ENCODE measurements at regions of chr17 and their contacts with region 1.

Region 1: DNA sequence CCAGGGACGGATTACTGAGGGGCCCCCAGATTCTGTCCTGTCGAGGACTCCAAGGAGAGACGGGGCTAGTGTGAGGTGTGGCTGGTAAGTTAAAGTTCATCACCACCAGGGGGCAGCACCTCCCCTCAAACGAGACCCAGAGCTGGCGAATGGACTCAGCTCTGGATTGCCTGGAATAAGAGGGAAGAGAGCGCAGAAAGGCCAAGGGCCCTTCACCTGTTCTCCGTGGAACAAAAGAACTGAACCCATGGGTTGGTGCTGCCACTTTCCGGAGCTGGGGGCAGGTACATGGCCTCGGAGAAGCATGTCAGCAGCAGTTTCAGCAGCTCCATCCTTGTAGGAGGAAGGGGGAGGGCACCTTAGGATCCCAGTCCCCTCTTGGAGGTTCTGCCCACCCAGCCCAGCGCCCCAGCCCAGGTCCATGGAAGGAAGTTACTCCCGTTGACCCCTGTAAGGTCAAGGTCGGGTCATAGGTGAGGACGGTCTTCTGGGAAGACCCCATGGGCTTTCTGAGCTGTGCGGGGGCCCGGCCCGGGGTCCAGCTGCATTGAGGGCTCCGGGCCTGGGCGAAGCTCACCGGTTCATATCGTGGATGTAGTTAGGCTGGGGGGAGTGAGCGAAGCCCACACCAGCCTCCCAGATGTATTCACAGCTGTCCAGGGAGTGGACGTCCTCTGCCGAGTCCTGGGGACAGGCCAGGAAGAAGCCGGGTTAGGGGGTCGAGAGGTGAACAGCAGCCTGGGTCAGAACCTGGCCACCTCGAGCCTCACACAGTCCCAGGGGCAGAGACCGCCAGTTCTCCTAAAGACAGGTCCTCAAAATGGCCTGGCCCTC is 10.7 kb downstream of the HID1 start:
- DNase-seq: peak; percentile 63 to 85
- H3K4me3 ChIP-seq: no peak overlapping the region
- H3K27ac ChIP-seq: no peak overlapping the region
- H3K4me1 ChIP-seq: no peaks in the 10 kb centered on the region
- H3K27me3 ChIP-seq: no peaks in the 10 kb centered on the region
- CTCF ChIP-seq: peak; percentile 91

Region 2: DNA sequence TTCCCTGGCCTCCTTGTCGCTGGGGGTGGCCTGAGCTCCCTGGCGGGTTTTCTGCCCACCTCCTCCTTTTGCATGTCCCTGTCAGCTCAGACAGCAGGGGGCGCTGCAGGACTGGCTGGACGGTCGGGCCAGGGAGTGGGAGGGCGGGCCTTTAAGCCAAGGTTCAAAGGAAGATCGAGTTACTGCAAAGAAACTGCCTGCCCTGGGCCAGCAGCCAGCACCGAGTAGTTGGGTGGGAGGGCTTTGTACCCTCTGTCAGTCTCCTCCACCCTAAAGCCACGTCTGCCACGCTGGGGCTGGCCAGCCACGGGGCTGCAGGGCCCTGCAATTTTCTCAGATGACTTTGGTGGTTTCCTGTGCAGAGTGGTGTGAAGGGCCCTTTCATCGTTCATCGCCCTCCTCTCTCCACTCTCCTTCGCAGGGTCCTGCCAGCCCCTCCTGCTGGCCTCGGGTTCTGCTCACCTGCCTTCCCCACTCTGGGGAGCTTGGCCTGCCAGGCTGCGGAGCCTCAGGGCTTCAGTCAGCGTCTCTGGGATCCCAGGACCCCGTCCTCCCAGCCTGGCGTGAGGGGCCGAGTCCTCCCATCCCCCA is 582.3 kb before region 1 on chr17:
- CTCF ChIA-PET with region 1: no interaction called
- POLR2A ChIA-PET with region 1: no interaction called
- intact Hi-C with region 1: loop called (anchors 5 kb)
- DNase-seq: peak; percentile 56 to 90
- H3K4me3 ChIP-seq: no peak overlapping the region
- H3K27ac ChIP-seq: no peak overlapping the region
- H3K4me1 ChIP-seq: peaks cover 17% of the 10 kb centered on the region
- H3K27me3 ChIP-seq: peaks cover 47% of the 10 kb centered on the region
- CTCF ChIP-seq: peak; percentile 95

Region 3: GRCh38 chr17:74776044-74776977 is 185.6 kb before region 1 on chr17 and contains the start of gene NAT9:
- CTCF ChIA-PET with region 1: interaction called, 8 read pairs
- POLR2A ChIA-PET with region 1: no interaction called
- intact Hi-C with region 1: loop called (anchors 10 kb)
- DNase-seq: peak; percentile 83 to 99
- H3K4me3 ChIP-seq: peak within 1 kb of the TSS; percentile 58
- H3K27ac ChIP-seq: 0 out of 2 replicates have a peak within 1 kb of the TSS, but pooled peaks have one; percentile 20
- H3K4me1 ChIP-seq: peaks cover 16% of the 10 kb centered on the region
- H3K27me3 ChIP-seq: no peaks in the 10 kb centered on the region
- CTCF ChIP-seq: no peak
- total RNA-seq, gene NAT9: 31.5 and 37.6 TPM in 2 replicates

Region 4: GRCh38 chr17:74833501-74834377 is 128.1 kb before region 1 on chr17:
- CTCF ChIA-PET with region 1: no interaction called
- POLR2A ChIA-PET with region 1: no interaction called
- intact Hi-C with region 1: no loop called
- DNase-seq: peak in 1 of 2 experiments; percentile 53
- H3K4me3 ChIP-seq: no peak overlapping the region
- H3K27ac ChIP-seq: no peak overlapping the region
- H3K4me1 ChIP-seq: no peaks in the 10 kb centered on the region
- H3K27me3 ChIP-seq: no peaks in the 10 kb centered on the region
- CTCF ChIP-seq: no peak

Region 5: DNA sequence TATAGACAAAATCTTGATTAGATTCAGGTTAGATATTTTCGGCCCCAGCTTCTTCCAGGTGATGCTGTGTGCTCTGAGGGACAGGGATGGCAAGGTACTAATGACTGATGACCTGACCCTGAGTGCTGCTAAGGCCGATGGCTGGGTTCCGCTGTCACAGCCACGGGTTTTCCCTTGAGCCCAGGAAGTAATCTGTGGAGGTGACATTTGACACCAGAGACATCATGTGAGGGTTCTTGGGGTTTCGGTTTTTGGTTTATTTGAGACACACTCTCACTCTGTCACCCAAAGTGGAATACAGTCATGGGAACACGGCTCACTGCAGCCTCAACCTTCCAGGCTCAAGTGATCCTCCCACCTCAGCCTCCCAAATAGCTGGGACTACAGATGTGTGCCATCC is 16.3 kb before region 1 on chr17:
- CTCF ChIA-PET with region 1: interaction called, 11 read pairs
- POLR2A ChIA-PET with region 1: no interaction called
- intact Hi-C with region 1: no loop called
- DNase-seq: no peak
- H3K4me3 ChIP-seq: no peak overlapping the region
- H3K27ac ChIP-seq: no peak overlapping the region
- H3K4me1 ChIP-seq: peaks cover 29% of the 10 kb centered on the region
- H3K27me3 ChIP-seq: no peaks in the 10 kb centered on the region
- CTCF ChIP-seq: no peak

Region 6: GRCh38 chr17:74999523-74999922 is 37.6 kb after region 1 on chr17:
- CTCF ChIA-PET with region 1: no interaction called
- POLR2A ChIA-PET with region 1: no interaction called
- intact Hi-C with region 1: no loop called
- DNase-seq: no peak
- H3K4me3 ChIP-seq: no peak overlapping the region
- H3K27ac ChIP-seq: no peak overlapping the region
- H3K4me1 ChIP-seq: no peaks in the 10 kb centered on the region; the same call in 1 of the 2 replicates
- H3K27me3 ChIP-seq: no peaks in the 10 kb centered on the region
- CTCF ChIP-seq: no peak

Region 7: GRCh38 chr17:75046582-75047289 is 84.9 kb after region 1 on chr17 and contains the starts of genes ATP5PD and KCTD2:
- CTCF ChIA-PET with region 1: no interaction called
- POLR2A ChIA-PET with region 1: interaction called, 5 read pairs
- intact Hi-C with region 1: loop called (anchors 5 kb)
- DNase-seq: peak; percentile 89 to 95
- H3K4me3 ChIP-seq: peak within 1 kb of the TSS; percentile 84
- H3K27ac ChIP-seq: peak within 1 kb of the TSS; percentile 60
- H3K4me1 ChIP-seq: peaks cover 22% of the 10 kb centered on the region
- H3K27me3 ChIP-seq: no peaks in the 10 kb centered on the region
- CTCF ChIP-seq: no peak; the same call in 1 of the 2 replicates
- total RNA-seq, gene ATP5PD: 306 and 336 TPM in 2 replicates
- total RNA-seq, gene KCTD2: 18.4 and 18.6 TPM in 2 replicates

Region 8: GRCh38 chr17:75131280-75132017 is 169.6 kb after region 1 on chr17 and contains the start of gene NT5C:
- CTCF ChIA-PET with region 1: no interaction called
- POLR2A ChIA-PET with region 1: no interaction called
- intact Hi-C with region 1: no loop called
- DNase-seq: peak; percentile 62 to 71
- H3K4me3 ChIP-seq: peak within 1 kb of the TSS; percentile 95
- H3K27ac ChIP-seq: peak within 1 kb of the TSS; percentile 72
- H3K4me1 ChIP-seq: peaks cover 20% of the 10 kb centered on the region
- H3K27me3 ChIP-seq: no peaks in the 10 kb centered on the region
- CTCF ChIP-seq: peak; percentile 65
- total RNA-seq, gene NT5C: 38.6 and 52.3 TPM in 2 replicates

Region 9: DNA sequence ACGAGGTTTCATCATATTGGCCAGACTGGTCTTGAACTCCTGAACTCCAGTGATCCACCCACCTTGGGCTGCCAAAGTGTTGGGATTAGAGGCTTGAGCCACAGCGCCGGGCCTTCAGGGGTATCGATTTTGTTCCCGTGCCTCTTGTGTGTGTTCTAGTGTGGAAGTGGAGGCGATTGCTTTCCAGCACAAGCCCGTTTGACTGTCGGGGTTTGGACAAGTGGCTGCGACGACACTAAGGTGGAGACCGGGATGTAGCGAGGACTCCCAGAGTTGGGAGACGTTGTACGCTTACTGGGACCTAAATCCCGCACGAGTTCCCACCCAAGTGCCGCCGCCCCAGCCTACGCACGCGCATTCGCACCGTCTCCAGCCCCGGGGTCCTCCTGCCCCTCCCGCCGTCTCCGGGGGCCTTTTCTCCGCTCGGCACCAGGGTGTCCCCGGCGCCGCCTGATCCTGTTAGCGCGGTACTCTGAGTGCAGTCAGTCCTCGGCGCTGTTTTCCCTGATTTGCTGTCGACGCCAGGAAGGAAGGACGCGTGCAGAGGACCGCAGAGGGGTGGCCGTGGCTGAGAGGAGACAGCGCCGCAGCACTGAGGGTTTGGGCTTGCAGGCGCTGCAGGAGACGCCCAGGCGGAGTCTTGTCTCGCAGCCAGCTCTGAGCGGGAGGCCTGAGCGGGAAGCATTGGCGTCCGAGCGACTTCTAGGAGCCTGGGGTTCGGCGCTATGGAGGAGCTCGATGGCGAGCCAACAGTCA is 243.3 kb after region 1 on chr17 and contains the start of gene NUP85:
- CTCF ChIA-PET with region 1: interaction called, 11 read pairs
- POLR2A ChIA-PET with region 1: no interaction called
- intact Hi-C with region 1: loop called (anchors 1 kb)
- DNase-seq: peak; percentile 90 to 96
- H3K4me3 ChIP-seq: peak within 1 kb of the TSS; percentile 93
- H3K27ac ChIP-seq: peak within 1 kb of the TSS; percentile 92
- H3K4me1 ChIP-seq: peaks cover 14% of the 10 kb centered on the region
- H3K27me3 ChIP-seq: no peaks in the 10 kb centered on the region
- CTCF ChIP-seq: no peak
- total RNA-seq, gene NUP85: 64.2 and 73.1 TPM in 2 replicates

Region 10: DNA sequence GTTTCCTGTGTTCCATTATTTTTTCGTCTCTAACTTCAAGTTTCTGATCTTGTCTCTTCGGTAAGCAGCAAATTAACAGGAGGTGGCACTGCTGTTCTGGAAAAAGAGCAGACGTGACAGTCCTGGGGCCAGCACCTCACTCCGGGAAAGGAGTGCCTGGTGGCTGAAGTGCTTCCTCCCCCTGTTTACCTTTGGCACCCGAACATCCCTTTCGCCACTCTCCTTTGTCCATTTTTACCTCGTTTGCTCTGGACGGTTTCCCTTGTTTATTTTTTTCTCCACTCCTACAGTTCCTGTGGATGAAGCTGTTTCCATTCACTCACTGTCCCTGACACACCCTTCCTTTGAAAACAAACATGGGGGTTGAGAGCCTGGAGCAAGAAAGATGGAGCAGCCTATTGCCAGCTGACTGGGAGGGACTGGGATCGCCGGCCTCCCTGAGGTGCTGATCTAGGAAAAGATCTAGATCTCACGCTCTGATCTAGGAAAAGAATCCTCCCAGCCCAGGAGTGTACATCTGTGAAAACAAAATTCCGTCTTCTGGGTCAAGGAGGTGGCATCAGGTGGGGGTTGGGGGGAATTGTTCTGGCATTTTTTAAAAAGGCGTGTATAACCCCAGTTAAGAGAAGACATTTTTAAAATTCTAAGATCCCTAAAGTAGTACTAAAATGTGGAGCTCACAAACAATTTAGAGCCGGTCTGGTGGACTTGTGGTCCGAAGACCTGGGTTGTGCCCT is 718.0 kb after region 1 on chr17:
- CTCF ChIA-PET with region 1: no interaction called
- POLR2A ChIA-PET with region 1: no interaction called
- intact Hi-C with region 1: no loop called
- DNase-seq: peak; percentile 70 to 77
- H3K4me3 ChIP-seq: no peak overlapping the region
- H3K27ac ChIP-seq: peak overlapping the region; percentile 51
- H3K4me1 ChIP-seq: peaks cover 59% of the 10 kb centered on the region
- H3K27me3 ChIP-seq: no peaks in the 10 kb centered on the region
- CTCF ChIP-seq: peak; percentile 58

Measured in PC-9 (cell line).